ENCODE measurements at regions of chr4 and their contacts with region 1.

Region 1: GRCh38 chr4:124202099-124202498 is 510.4 kb downstream of the ANKRD50 start:
- DNase-seq: peak in 1 of 2 donors; percentile 70
- ATAC-seq: peak; percentile 73
- H3K4me3 ChIP-seq: no peak overlapping the region
- H3K27ac ChIP-seq: no peak overlapping the region
- H3K4me1 ChIP-seq: peaks cover 0 to 3% of the 10 kb centered on the region in 2 donors
- H3K27me3 ChIP-seq: no peaks in the 10 kb centered on the region

Region 2: GRCh38 chr4:124144238-124144654 is 57.9 kb before region 1 on chr4:
- intact Hi-C with region 1: loop called in 1 of 2 experiments (anchors 10 kb)
- DNase-seq: no peak
- ATAC-seq: no peak
- H3K4me3 ChIP-seq: no peak overlapping the region
- H3K27ac ChIP-seq: no peak overlapping the region
- H3K4me1 ChIP-seq: no peaks in the 10 kb centered on the region
- H3K27me3 ChIP-seq: no peaks in the 10 kb centered on the region